ENCODE measurements at regions of chr10 and their contacts with region 1.

Region 1: DNA sequence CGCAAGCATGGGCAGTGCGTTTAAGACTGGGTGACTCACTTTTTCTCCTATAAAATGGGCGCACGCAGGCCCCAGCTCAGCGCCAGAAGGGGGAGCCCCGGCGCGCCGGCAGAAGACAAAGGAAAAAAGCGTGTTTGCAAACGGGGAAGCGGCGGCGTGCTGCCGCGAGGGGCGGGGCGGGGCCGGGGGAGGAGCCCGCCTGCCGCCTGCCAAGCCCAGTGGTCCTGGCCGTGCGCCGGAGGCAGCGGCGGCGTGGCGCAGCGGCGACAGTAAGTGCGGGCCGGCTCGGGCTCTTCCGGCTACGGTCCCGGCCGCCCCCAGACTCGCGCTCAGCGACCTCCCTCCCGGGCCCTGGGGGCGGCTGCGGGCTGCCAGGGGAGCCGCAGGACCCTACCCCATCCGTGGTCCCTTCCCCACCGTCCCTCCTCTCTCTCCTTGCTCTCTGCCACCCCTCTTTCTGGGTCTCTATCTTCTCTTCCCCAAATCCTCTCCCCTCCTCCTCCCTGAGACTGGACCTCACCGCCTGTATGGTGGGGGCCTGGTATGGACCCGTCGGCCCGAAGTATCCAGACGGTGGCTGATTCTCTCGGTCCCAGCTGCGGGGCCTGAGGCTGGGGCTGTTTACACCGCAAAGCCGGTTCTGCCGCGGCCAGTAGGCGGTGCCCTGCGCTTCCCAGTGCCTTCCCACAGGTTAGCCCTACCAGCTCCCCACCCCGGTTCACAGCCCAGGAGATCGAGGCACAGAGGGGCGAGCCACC is at the start of gene SLC29A3:
- DNase-seq: peak; percentile 90
- H3K4me3 ChIP-seq: peak within 1 kb of the TSS; percentile 66 to 85 (median 74)
- H3K27ac ChIP-seq: peak within 1 kb of the TSS; percentile 74 to 86 (median 79)
- H3K4me1 ChIP-seq: peaks cover 0 to 21% (median 19%) of the 10 kb centered on the region in 4 donors
- H3K27me3 ChIP-seq: no peaks in the 10 kb centered on the region
- CTCF ChIP-seq: peak; percentile 47 to 68 (median 56)
- EP300 ChIP-seq: no peak
- POLR2A ChIP-seq: no peak
- total RNA-seq, gene SLC29A3: 2.9 to 6.2 (median 4.7) TPM

Region 2: GRCh38 chr10:71378336-71379117 is 59.3 kb after region 1 on chr10:
- intact Hi-C with region 1: loop called (anchors 2 kb)
- DNase-seq: no peak
- H3K4me3 ChIP-seq: no peak overlapping the region
- H3K27ac ChIP-seq: peak overlapping the region in 3 of 4 donors; percentile 82 to 88 (median 87)
- H3K4me1 ChIP-seq: peaks cover 0 to 10% (median 8%) of the 10 kb centered on the region in 4 donors
- H3K27me3 ChIP-seq: no peaks in the 10 kb centered on the region
- CTCF ChIP-seq: no peak
- EP300 ChIP-seq: no peak
- POLR2A ChIP-seq: no peak

Region 3: GRCh38 chr10:71396084-71396720 is 77.0 kb after region 1 on chr10:
- intact Hi-C with region 1: loop called (anchors 5 kb)
- DNase-seq: peak; percentile 75
- H3K4me3 ChIP-seq: peak overlapping the region; percentile 43 to 61 (median 52)
- H3K27ac ChIP-seq: peak overlapping the region in 3 of 4 donors; percentile 19 to 79 (median 63)
- H3K4me1 ChIP-seq: peaks cover 0 to 26% (median 18%) of the 10 kb centered on the region in 4 donors
- H3K27me3 ChIP-seq: peaks cover 23 to 46% (median 38%) of the 10 kb centered on the region in 3 donors
- CTCF ChIP-seq: peak; percentile 21 to 55 (median 38)
- EP300 ChIP-seq: no peak
- POLR2A ChIP-seq: no peak

Region 4: DNA sequence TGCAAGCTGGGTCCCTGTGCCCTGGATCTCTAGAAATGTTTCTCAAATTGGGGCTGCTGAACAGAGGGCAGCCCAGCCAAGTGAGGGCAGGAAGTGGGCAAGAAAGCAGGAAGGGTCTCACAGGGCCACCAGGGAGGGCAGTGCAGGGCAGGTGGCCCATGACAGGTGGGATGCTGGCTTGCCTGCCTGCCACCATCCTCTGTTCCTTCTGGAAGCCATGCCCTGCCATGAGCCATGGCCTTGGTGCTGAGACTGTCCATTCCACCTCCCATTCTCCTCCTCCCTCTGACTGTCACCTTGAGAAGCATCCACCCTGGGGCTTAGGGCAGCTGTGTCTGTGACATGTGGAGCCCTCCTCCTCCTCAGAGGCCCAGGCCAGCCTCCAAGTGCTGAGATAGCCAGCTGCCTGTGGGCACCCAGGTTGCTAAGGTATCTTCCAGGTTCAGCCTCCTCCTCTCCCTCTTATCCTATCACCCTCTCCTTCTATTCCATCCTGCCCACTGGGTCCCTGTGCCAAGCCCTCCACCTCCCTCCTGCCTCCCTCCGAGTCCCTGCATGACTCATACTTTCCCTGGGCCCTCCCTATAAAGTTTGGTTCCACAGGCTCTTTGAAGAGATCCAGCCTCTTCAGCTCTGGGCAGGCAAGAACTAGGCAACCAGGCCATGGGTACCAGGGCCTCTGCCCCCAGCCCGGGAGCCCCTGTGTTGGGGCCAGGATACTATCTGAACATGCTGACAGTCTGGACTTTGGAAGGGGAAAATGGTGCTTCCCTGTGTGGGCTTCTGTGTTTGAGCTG is 452.8 kb after region 1 on chr10:
- intact Hi-C with region 1: loop called (anchors 2 kb)
- DNase-seq: peak; percentile 96
- H3K4me3 ChIP-seq: peak overlapping the region; percentile 67 to 87 (median 70)
- H3K27ac ChIP-seq: peak overlapping the region; percentile 89 to 98 (median 92)
- H3K4me1 ChIP-seq: peaks cover 0 to 75% (median 65%) of the 10 kb centered on the region in 4 donors
- H3K27me3 ChIP-seq: no peaks in the 10 kb centered on the region
- CTCF ChIP-seq: no peak
- EP300 ChIP-seq: peak in 2 of 4 donors; percentile 43 to 46
- POLR2A ChIP-seq: peak; percentile 51 to 53

Region 5: DNA sequence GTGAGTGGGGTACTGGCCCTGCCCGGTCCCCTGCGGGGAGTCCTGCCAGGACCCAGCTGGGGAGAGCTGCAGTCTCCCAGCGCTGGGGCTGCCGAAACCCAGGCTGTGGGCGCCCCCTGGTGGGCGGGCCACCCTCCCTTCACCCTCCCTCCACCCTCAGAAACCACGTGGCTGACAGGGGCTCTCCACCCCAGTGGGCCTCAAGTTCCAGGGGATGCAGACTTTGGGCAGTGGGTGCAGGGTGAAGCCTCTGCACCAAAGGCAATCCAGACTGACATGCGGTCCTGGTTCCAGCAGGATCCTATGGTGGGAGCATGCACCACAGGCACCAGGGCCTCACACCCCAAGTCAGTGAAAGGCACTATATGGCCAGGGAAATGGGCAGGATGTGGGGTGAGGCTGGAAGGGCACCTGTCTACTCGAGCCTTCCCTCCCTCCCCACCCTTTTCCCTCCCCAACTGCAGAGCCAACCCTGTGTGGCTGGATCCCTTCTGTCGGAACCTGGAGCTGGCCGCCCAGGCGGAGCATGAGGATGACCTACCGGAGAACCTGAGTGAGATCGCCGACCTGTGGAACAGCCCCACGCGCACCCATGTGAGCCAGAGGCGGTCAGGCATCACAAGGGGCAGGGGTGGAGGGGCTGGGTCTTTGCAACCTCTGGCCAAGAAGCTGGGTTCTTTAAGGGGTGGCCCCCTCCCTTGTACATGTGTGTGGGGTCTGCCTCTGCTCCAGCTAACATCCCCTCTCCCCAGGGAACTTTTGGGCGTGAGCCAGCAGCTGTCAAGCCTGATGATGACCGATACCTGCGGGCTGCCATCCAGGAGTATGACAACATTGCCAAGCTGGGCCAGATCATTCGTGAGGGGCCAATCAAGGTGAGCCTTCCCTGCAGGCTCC is 493.0 kb after region 1 on chr10:
- intact Hi-C with region 1: loop called (anchors 5 kb)
- DNase-seq: peak; percentile 78
- H3K4me3 ChIP-seq: no peak overlapping the region
- H3K27ac ChIP-seq: no peak overlapping the region
- H3K4me1 ChIP-seq: peaks cover 0 to 10% (median 6%) of the 10 kb centered on the region in 4 donors
- H3K27me3 ChIP-seq: peaks cover 0 to 8% (median 0%) of the 10 kb centered on the region in 3 donors
- CTCF ChIP-seq: peak; percentile 55 to 89 (median 82)
- EP300 ChIP-seq: no peak
- POLR2A ChIP-seq: no peak

Region 6: GRCh38 chr10:71899665-71900412 is 580.6 kb after region 1 on chr10:
- intact Hi-C with region 1: loop called (anchors 5 kb)
- DNase-seq: no peak
- H3K4me3 ChIP-seq: no peak overlapping the region
- H3K27ac ChIP-seq: no peak overlapping the region
- H3K4me1 ChIP-seq: no peaks in the 10 kb centered on the region
- H3K27me3 ChIP-seq: no peaks in the 10 kb centered on the region
- CTCF ChIP-seq: no peak
- EP300 ChIP-seq: no peak
- POLR2A ChIP-seq: no peak